ENCODE measurements at regions of chr12 and their contacts with region 1.

Region 1: GRCh38 chr12:14769969-14770495 is 33.2 kb downstream of the WBP11 start:
- DNase-seq: peak; percentile 89 to 94
- ATAC-seq: peak; percentile 81
- H3K4me3 ChIP-seq: peak overlapping the region; percentile 71 to 94
- H3K27ac ChIP-seq: peak overlapping the region; percentile 92 to 98
- H3K4me1 ChIP-seq: no peaks in the 10 kb centered on the region
- H3K27me3 ChIP-seq: no peaks in the 10 kb centered on the region

Region 2: GRCh38 chr12:12890815-12891645 is 1879.0 kb before region 1 on chr12 and contains the start of gene GPRC5A:
- intact Hi-C with region 1: loop called in 1 of 2 experiments (anchors 10 kb)
- DNase-seq: peak; percentile 94 to 96
- ATAC-seq: peak; percentile 95
- H3K4me3 ChIP-seq: peak within 1 kb of the TSS; percentile 72 to 93
- H3K27ac ChIP-seq: peak within 1 kb of the TSS; percentile 69 to 97
- H3K4me1 ChIP-seq: no peaks in the 10 kb centered on the region
- H3K27me3 ChIP-seq: no peaks in the 10 kb centered on the region
- total RNA-seq, gene GPRC5A: 36.6 to 86.0 TPM

Region 3: GRCh38 chr12:14650789-14651188 is 119.2 kb before region 1 on chr12:
- intact Hi-C with region 1: loop called in 1 of 2 experiments (anchors 10 kb)
- DNase-seq: no peak
- ATAC-seq: peak; percentile 75
- H3K4me3 ChIP-seq: no peak overlapping the region
- H3K27ac ChIP-seq: no peak overlapping the region
- H3K4me1 ChIP-seq: no peaks in the 10 kb centered on the region
- H3K27me3 ChIP-seq: no peaks in the 10 kb centered on the region

Region 4: DNA sequence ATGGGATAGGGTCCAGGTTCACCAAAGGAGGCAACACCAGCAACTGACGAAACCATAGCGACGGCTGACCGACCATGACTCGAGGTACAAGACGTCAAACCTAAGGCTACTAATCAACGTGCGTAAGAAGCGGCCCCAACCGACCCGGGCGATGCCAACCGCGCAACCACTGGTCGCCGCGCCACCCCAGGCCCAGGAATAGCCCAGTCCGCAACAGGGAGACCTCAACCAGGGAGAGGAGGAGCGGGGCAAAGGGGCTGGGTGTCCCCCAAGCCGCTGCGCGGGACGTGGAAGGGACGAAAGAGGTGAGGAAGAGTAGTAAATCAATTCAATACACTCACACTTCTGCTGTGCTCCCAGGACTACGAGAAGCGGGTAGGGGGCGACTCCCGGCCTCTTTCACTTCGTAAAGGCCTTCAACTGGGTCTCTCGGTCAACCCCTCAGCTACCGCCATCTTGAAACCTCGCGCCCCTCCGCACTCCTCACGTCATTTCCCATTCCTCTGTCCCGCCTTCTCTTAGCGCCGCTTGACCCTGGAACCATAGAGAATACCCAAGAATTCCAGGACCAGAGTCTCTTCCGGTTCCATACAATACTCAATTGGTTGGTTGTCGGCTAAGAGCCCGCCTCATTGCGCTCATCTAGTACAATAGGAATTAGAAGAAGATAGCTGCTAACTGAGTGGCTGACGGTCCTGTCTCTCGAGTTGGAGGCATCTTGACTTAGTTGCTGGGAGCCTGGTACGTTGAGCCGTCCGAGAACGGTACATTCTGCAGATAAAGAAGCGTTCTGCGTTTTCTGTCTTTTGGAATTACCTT is 33.2 kb after region 1 on chr12 and contains the starts of genes C12orf60 and WBP11:
- intact Hi-C with region 1: loop called in 1 of 2 experiments (anchors 2 kb)
- DNase-seq: peak; percentile 94 to 96
- ATAC-seq: peak; percentile 99
- H3K4me3 ChIP-seq: peak within 1 kb of the TSS; percentile 90 to 96
- H3K27ac ChIP-seq: peak within 1 kb of the TSS in 1 of 2 donors; percentile 76
- H3K4me1 ChIP-seq: no peaks in the 10 kb centered on the region
- H3K27me3 ChIP-seq: no peaks in the 10 kb centered on the region
- total RNA-seq, gene C12orf60: 0.91 to 1.1 TPM
- total RNA-seq, gene WBP11: 43.2 to 44.7 TPM